A673 (cell line): ENCODE measurements at regions of chr3 and their contacts with region 1.

Region 1: DNA sequence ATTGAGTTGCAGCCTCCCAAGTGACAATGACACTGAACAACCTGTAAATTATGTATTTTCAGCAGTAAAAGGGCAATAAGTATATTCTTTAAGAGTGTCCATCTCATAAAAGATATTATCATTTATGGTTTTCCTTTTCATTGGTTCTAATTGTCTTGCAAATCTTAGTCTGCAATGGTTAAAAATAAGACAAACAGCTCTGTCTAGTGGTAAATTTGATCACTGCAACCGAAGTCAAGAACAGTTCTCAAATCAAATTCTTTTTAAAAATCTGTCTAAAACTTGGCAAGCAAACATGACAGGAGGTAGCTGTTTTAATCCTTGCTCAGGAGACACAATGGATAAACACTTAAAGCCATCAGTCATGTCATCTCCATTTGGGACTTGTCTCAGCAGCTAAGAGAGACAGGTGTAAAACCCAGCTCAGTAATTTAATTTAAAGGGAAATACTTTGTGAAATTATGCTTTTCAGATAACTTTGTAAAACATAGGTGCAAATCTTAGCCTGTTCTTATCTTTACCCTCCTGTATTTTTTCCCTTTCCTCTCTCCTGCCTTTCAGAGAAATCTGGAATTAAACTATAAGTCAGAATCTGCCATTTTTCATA is 150.3 kb upstream of the ARHGEF26 start:
- DNase-seq: peak; percentile 78
- H3K4me3 ChIP-seq: no peak overlapping the region
- H3K27ac ChIP-seq: no peak overlapping the region
- H3K4me1 ChIP-seq: peaks cover 46% of the 10 kb centered on the region
- H3K27me3 ChIP-seq: peaks cover 9% of the 10 kb centered on the region
- CTCF ChIP-seq: peak; percentile 78

Region 2: GRCh38 chr3:152998591-152998990 is 972.3 kb before region 1 on chr3:
- CTCF ChIA-PET with region 1: no interaction called
- POLR2A ChIA-PET with region 1: no interaction called
- intact Hi-C with region 1: no loop called
- DNase-seq: peak; percentile 16
- H3K4me3 ChIP-seq: no peak overlapping the region
- H3K27ac ChIP-seq: no peak overlapping the region
- H3K4me1 ChIP-seq: no peaks in the 10 kb centered on the region
- H3K27me3 ChIP-seq: no peaks in the 10 kb centered on the region
- CTCF ChIP-seq: no peak

Region 3: DNA sequence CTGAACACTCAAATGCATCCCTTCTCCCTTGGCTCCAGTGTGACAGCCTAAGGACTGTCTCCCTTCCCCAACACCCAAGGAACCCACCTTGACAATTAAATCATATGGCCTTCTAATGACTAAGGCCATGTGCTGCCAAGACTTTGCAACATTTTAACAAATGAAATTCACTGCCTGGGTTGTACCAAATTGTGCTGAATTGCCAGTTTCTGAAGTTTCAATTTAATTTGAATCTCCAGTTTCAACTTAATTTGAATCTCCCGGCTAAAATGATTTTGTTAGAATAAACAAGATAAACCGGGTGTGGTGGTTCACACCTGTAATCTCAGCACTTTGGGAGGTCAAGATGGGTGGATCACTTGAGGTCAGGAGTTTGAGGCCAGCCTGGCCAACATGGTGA is 881.2 kb before region 1 on chr3:
- CTCF ChIA-PET with region 1: interaction called, 10 read pairs
- POLR2A ChIA-PET with region 1: no interaction called
- intact Hi-C with region 1: no loop called
- DNase-seq: no peak
- H3K4me3 ChIP-seq: no peak overlapping the region
- H3K27ac ChIP-seq: no peak overlapping the region
- H3K4me1 ChIP-seq: peaks cover 8% of the 10 kb centered on the region
- H3K27me3 ChIP-seq: no peaks in the 10 kb centered on the region
- CTCF ChIP-seq: no peak

Region 4: GRCh38 chr3:153595186-153595815 is 375.5 kb before region 1 on chr3:
- CTCF ChIA-PET with region 1: no interaction called
- POLR2A ChIA-PET with region 1: no interaction called
- intact Hi-C with region 1: loop called (anchors 5 kb)
- DNase-seq: peak; percentile 65
- H3K4me3 ChIP-seq: no peak overlapping the region
- H3K27ac ChIP-seq: no peak overlapping the region
- H3K4me1 ChIP-seq: peaks cover 7% of the 10 kb centered on the region
- H3K27me3 ChIP-seq: peaks cover 10% of the 10 kb centered on the region
- CTCF ChIP-seq: peak; percentile 63

Region 5: GRCh38 chr3:153621953-153622352 is 348.9 kb before region 1 on chr3:
- CTCF ChIA-PET with region 1: no interaction called
- POLR2A ChIA-PET with region 1: no interaction called
- intact Hi-C with region 1: no loop called
- DNase-seq: peak; percentile 35
- H3K4me3 ChIP-seq: no peak overlapping the region
- H3K27ac ChIP-seq: no peak overlapping the region
- H3K4me1 ChIP-seq: peaks cover 5% of the 10 kb centered on the region
- H3K27me3 ChIP-seq: no peaks in the 10 kb centered on the region
- CTCF ChIP-seq: no peak

Region 6: GRCh38 chr3:153783106-153783505 is 187.7 kb before region 1 on chr3:
- CTCF ChIA-PET with region 1: interaction called, 8 read pairs
- POLR2A ChIA-PET with region 1: no interaction called
- intact Hi-C with region 1: loop called (anchors 1 kb)
- DNase-seq: peak; percentile 96
- H3K4me3 ChIP-seq: no peak overlapping the region
- H3K27ac ChIP-seq: no peak overlapping the region
- H3K4me1 ChIP-seq: peaks cover 32% of the 10 kb centered on the region
- H3K27me3 ChIP-seq: no peaks in the 10 kb centered on the region
- CTCF ChIP-seq: no peak